CD4-positive, alpha-beta memory T cell (primary cell): ENCODE measurements at regions of chr6 and their contacts with region 1.

Region 1: GRCh38 chr6:151440930-151441329 is 11.0 kb downstream of the RMND1 start:
- DNase-seq: peak in 4 of 5 donors; percentile 11 to 32 (median 18)
- H3K4me3 ChIP-seq: no peak overlapping the region
- H3K4me3 Mint-ChIP-seq: peak overlapping the region in 1 of 8 donors; percentile 17
- H3K27ac ChIP-seq: no peak overlapping the region
- H3K27ac Mint-ChIP-seq: no peak overlapping the region
- H3K4me1 ChIP-seq: peaks cover 16% of the 10 kb centered on the region
- H3K4me1 Mint-ChIP-seq: peaks cover 27 to 54% (median 35%) of the 10 kb centered on the region in 4 donors
- H3K27me3 ChIP-seq: no peaks in the 10 kb centered on the region
- H3K27me3 Mint-ChIP-seq: no peaks in the 10 kb centered on the region

Region 2: DNA sequence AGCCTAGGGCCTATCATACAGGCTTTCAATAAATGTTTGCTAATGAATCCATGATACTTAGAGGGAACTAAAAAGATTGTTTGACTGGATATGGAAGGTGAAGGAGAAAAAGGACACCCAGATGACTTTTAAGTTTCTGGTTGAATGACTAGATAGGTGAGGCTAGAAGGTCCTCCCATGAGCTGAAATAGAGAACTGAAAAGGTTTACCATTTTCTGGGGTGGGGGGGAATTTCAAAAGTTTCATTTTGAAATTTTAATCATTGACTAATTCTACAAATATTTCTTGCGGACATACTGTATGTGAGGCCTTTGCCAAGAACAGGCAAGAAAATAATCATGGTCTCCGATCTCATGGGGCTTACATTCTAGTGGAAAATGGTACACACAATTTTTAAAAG is 31.7 kb before region 1 on chr6:
- CTCF ChIA-PET with region 1: interaction called, 21 read pairs
- POLR2A ChIA-PET with region 1: no interaction called
- intact Hi-C with region 1: no loop called
- DNase-seq: no peak
- H3K4me3 ChIP-seq: no peak overlapping the region
- H3K4me3 Mint-ChIP-seq: no peak overlapping the region
- H3K27ac ChIP-seq: no peak overlapping the region
- H3K27ac Mint-ChIP-seq: peak overlapping the region in 5 of 7 donors; percentile 3 to 79 (median 60)
- H3K4me1 ChIP-seq: peaks cover 16% of the 10 kb centered on the region
- H3K4me1 Mint-ChIP-seq: peaks cover 22 to 33% (median 29%) of the 10 kb centered on the region in 4 donors
- H3K27me3 ChIP-seq: no peaks in the 10 kb centered on the region
- H3K27me3 Mint-ChIP-seq: no peaks in the 10 kb centered on the region

Region 3: GRCh38 chr6:151675746-151676416 is 235.0 kb after region 1 on chr6:
- CTCF ChIA-PET with region 1: no interaction called
- POLR2A ChIA-PET with region 1: no interaction called
- intact Hi-C with region 1: loop called (anchors 10 kb)
- DNase-seq: peak; percentile 46 to 57 (median 48)
- H3K4me3 ChIP-seq: no peak overlapping the region
- H3K4me3 Mint-ChIP-seq: no peak overlapping the region
- H3K27ac ChIP-seq: no peak overlapping the region
- H3K27ac Mint-ChIP-seq: no peak overlapping the region
- H3K4me1 ChIP-seq: no peaks in the 10 kb centered on the region
- H3K4me1 Mint-ChIP-seq: peaks cover 0 to 2% (median under 1%) of the 10 kb centered on the region in 4 donors
- H3K27me3 ChIP-seq: no peaks in the 10 kb centered on the region
- H3K27me3 Mint-ChIP-seq: peaks cover 1 to 4% of the 10 kb centered on the region in 2 donors